ENCODE measurements at regions of chr3 and their contacts with region 1.

Region 1: GRCh38 chr3:42961633-42962032 is 17.5 kb upstream of the GASK1A start:
- DNase-seq: peak in 20 of 35 experiments; percentile 4 to 65 (median 15)
- ATAC-seq: peak in 1 of 4 experiments; percentile 32
- H3K4me3 ChIP-seq: no peak overlapping the region
- H3K4me3 Mint-ChIP-seq: no peak overlapping the region
- H3K27ac ChIP-seq: no peak overlapping the region
- H3K27ac Mint-ChIP-seq: no peak overlapping the region
- H3K4me1 ChIP-seq: peaks cover 4 to 24% of the 10 kb centered on the region in 2 experiments
- H3K4me1 Mint-ChIP-seq: peaks cover 28 to 31% (median 31%) of the 10 kb centered on the region in 3 donors
- H3K27me3 ChIP-seq: no peaks in the 10 kb centered on the region
- H3K27me3 Mint-ChIP-seq: peaks cover 0 to 6% of the 10 kb centered on the region in 2 donors

Region 2: DNA sequence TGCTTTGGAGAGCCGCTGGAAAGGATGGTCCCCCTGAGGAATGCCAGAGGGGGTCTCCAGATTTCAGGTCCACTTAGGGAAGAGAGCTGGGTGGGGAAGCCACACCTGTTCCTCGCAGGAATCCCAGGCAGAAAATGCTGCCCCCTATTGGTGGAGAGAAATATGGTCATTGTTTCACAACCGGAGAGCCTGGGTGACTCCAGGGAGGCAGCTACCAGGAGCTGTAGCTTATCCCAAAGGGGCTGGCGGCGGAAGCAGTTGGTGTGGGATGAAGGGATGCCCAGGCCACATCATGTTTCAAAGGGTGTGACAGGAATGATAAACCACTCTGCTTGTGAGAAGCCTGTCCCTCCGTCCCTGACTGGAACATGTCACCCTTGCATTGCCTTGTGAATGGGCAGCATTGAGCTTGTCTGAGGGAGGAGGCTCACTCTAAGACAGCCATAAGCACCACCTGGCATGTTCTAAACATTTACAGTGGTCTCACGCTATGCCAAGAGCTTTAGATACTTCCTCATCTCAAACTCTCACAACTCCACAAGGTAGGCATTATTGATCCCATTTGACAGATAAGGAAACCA is 109.8 kb after region 1 on chr3:
- CTCF ChIA-PET with region 1: interaction called, 8 to 17 read pairs
- POLR2A ChIA-PET with region 1: no interaction called
- DNase-seq: peak in 13 of 35 experiments; percentile 6 to 60 (median 12)
- ATAC-seq: no peak
- H3K4me3 ChIP-seq: no peak overlapping the region
- H3K4me3 Mint-ChIP-seq: no peak overlapping the region
- H3K27ac ChIP-seq: no peak overlapping the region
- H3K27ac Mint-ChIP-seq: no peak overlapping the region
- H3K4me1 ChIP-seq: no peaks in the 10 kb centered on the region
- H3K4me1 Mint-ChIP-seq: peaks cover 0 to 3% (median 0%) of the 10 kb centered on the region in 3 donors
- H3K27me3 ChIP-seq: peaks cover 0 to 10% of the 10 kb centered on the region in 2 experiments
- H3K27me3 Mint-ChIP-seq: no peaks in the 10 kb centered on the region

Region 3: GRCh38 chr3:43759297-43759782 is 797.7 kb after region 1 on chr3:
- CTCF ChIA-PET with region 1: no interaction called
- POLR2A ChIA-PET with region 1: no interaction called
- DNase-seq: peak in 1 of 35 experiments; percentile 30
- ATAC-seq: peak in 3 of 4 experiments; percentile 39 to 41 (median 40)
- H3K4me3 ChIP-seq: no peak overlapping the region
- H3K4me3 Mint-ChIP-seq: no peak overlapping the region
- H3K27ac ChIP-seq: no peak overlapping the region
- H3K27ac Mint-ChIP-seq: peak overlapping the region; percentile 33 to 80
- H3K4me1 ChIP-seq: peaks cover 9 to 41% of the 10 kb centered on the region in 2 experiments
- H3K4me1 Mint-ChIP-seq: peaks cover 48 to 52% (median 50%) of the 10 kb centered on the region in 3 donors
- H3K27me3 ChIP-seq: no peaks in the 10 kb centered on the region
- H3K27me3 Mint-ChIP-seq: peaks cover 0 to 4% of the 10 kb centered on the region in 2 donors

Measured in T-cell (primary cell).